AG04450 (cell line): ENCODE measurements at regions of chr3 and their contacts with region 1.

Region 1: GRCh38 chr3:32018757-32019564 is 37.4 kb downstream of the ZNF860 start:
- DNase-seq: no peak
- H3K4me3 ChIP-seq: no peak overlapping the region
- H3K27ac ChIP-seq: no peak overlapping the region
- H3K27me3 ChIP-seq: peaks cover 2% of the 10 kb centered on the region
- CTCF ChIP-seq: peak; percentile 73

Region 2: DNA sequence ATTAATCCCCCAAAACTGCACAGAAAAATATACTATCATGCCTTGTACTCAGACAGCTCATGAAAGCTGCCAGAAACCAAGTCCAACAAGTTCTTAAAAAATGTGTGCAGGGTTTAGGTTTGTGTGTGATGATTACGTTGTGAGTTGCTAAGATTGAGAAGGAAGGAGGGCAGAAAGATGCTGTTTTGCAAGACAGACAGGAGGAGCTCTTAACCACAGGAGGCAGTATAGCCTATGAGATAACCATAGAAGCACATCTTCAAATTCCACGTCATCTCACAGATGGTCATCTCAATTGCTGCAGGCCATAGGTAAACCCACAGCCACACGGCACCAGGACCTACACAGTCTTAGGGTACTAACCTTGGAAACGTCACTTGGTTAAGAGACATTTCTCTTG is 294.3 kb before region 1 on chr3:
- CTCF ChIA-PET with region 1: interaction called, 11 read pairs
- POLR2A ChIA-PET with region 1: no interaction called
- DNase-seq: peak; percentile 27
- H3K4me3 ChIP-seq: no peak overlapping the region
- H3K27ac ChIP-seq: no peak overlapping the region
- H3K27me3 ChIP-seq: no peaks in the 10 kb centered on the region
- CTCF ChIP-seq: peak; percentile 56

Region 3: DNA sequence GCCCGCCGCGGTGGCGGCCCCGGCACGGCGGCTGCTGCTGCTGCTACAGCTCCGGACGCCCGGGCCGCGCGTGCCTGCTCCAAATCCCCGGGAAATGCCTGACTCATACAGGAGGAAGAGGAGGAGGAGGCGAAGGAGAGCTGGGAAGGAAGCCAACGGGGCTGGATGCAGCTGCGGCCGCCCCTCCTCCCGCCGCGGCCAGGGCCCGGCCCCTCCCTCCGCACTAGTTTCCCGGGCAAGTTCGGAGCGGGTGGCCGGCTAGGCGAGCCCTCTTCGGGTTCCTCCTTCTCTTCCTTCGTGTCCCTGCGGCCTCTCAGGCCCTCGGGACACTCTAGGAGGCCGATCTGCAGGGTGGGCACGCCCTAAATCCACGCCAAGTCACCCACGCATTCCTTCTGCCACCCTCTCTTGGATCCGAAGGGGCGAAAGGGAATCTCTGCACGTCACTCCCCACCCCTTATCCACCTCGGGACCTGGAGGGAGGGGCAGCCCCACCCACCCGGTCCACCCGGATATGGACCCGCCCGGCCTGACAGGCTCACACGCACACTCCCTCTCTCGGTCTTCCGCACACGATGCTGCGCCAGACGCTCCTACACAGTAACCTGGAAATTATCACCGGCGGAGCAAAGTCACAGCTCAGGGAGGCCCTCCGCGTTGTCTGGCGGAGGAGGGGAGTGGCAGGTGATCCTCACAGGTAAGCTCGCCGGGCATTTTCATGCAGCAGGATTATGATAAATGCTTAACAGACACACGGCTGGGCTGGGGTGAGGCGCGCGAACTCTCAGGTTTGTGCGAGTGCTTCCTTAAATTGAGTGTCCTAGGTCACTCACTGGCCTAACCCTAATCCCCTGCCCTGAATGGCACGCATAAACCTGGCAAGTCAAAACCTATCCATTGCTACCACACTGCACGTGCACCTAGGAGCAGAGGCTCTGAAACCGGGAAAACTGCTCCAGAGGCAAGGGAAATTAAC is 37.5 kb before region 1 on chr3 and contains the starts of genes OSBPL10 and ZNF860:
- CTCF ChIA-PET with region 1: interaction called, 11 read pairs
- POLR2A ChIA-PET with region 1: no interaction called
- DNase-seq: peak; percentile 81
- H3K4me3 ChIP-seq: peak within 1 kb of the TSS; percentile 90
- H3K27ac ChIP-seq: peak within 1 kb of the TSS; percentile 52
- H3K27me3 ChIP-seq: no peaks in the 10 kb centered on the region
- CTCF ChIP-seq: no peak
- polyA plus RNA-seq, gene OSBPL10: 12.3 and 13.2 TPM in 2 replicates
- polyA plus RNA-seq, gene ZNF860: 0.48 and 0.63 TPM in 2 replicates

Region 4: GRCh38 chr3:32045091-32045964 is 26.4 kb after region 1 on chr3:
- CTCF ChIA-PET with region 1: interaction called, 18 read pairs
- POLR2A ChIA-PET with region 1: interaction called, 6 read pairs
- DNase-seq: peak; percentile 78
- H3K4me3 ChIP-seq: peak overlapping the region; percentile 24
- H3K27ac ChIP-seq: peak overlapping the region; percentile 81
- H3K27me3 ChIP-seq: peaks cover 3% of the 10 kb centered on the region
- CTCF ChIP-seq: peak; percentile 19; the same call in 1 of the 2 replicates

Region 5: DNA sequence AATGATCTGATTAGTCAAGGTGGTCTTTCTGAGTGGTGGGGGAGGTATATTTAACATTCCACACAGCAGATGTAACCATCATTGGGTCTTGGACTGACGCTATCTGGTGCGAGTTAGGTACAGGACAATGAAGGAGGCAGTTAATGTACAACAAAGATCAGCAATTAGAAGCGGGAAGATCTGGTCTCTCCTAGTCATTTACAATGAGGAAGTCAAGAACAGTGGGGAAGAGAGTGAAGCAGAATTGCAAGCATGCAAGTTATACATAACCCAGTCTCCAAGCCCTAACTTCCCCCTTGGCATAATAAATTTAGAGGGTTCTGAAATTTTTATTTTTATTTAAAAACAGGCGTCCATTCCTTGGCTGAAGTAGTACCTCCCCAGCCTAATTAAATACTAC is 101.5 kb after region 1 on chr3:
- CTCF ChIA-PET with region 1: no interaction called
- POLR2A ChIA-PET with region 1: no interaction called
- DNase-seq: no peak
- H3K4me3 ChIP-seq: no peak overlapping the region
- H3K27ac ChIP-seq: no peak overlapping the region
- H3K27me3 ChIP-seq: no peaks in the 10 kb centered on the region
- CTCF ChIP-seq: no peak

Region 6: GRCh38 chr3:32143849-32144757 is 125.1 kb after region 1 on chr3:
- CTCF ChIA-PET with region 1: interaction called, 38 read pairs
- POLR2A ChIA-PET with region 1: no interaction called
- DNase-seq: peak; percentile 91
- H3K4me3 ChIP-seq: no peak overlapping the region
- H3K27ac ChIP-seq: peak overlapping the region; percentile 34
- H3K27me3 ChIP-seq: no peaks in the 10 kb centered on the region
- CTCF ChIP-seq: peak; percentile 77